CD4-positive, alpha-beta T cell (primary cell): ENCODE measurements at regions of chr18 and their contacts with region 1.

Region 1: GRCh38 chr18:63155169-63155852 is 164.3 kb downstream of the BCL2 start:
- DNase-seq: peak; percentile 63 to 90 (median 76)
- ATAC-seq: peak; percentile 75
- H3K4me3 ChIP-seq: peak overlapping the region; percentile 51
- H3K4me3 Mint-ChIP-seq: peak overlapping the region; percentile 85
- H3K27ac ChIP-seq: peak overlapping the region; percentile 95 to 96
- H3K27ac Mint-ChIP-seq: peak overlapping the region; percentile 91
- H3K4me1 ChIP-seq: peaks cover 97% of the 10 kb centered on the region
- H3K4me1 Mint-ChIP-seq: peaks cover 100% of the 10 kb centered on the region
- H3K27me3 ChIP-seq: no peaks in the 10 kb centered on the region
- H3K27me3 Mint-ChIP-seq: no peaks in the 10 kb centered on the region
- CTCF ChIP-seq: peak; percentile 94

Region 2: DNA sequence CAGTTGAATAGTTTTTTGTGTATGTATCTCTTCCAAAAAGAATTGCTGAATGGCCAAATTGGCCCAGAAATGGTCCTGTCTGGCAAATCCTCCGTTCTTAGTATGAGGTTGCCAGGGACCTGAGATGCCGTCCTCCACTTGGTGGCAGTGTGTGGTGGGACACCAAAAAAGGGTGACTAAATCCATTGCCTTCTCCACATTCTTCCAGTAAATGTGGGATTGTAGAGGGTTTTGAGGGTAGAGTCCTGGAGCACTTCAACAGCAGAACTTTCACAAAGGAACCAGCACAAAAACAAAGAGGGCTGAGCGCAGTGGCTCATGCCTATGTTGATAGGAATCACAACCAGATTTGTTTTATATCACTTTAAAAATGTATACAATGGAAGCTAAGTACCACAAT is 35.7 kb before region 1 on chr18:
- CTCF ChIA-PET with region 1: no interaction called
- POLR2A ChIA-PET with region 1: no interaction called
- intact Hi-C with region 1: no loop called
- DNase-seq: peak in 4 of 14 experiments; percentile 21 to 44 (median 32)
- ATAC-seq: no peak
- H3K4me3 ChIP-seq: no peak overlapping the region
- H3K4me3 Mint-ChIP-seq: no peak overlapping the region
- H3K27ac ChIP-seq: no peak overlapping the region
- H3K27ac Mint-ChIP-seq: no peak overlapping the region
- H3K4me1 ChIP-seq: no peaks in the 10 kb centered on the region
- H3K4me1 Mint-ChIP-seq: no peaks in the 10 kb centered on the region
- H3K27me3 ChIP-seq: no peaks in the 10 kb centered on the region
- H3K27me3 Mint-ChIP-seq: no peaks in the 10 kb centered on the region
- CTCF ChIP-seq: no peak

Region 3: DNA sequence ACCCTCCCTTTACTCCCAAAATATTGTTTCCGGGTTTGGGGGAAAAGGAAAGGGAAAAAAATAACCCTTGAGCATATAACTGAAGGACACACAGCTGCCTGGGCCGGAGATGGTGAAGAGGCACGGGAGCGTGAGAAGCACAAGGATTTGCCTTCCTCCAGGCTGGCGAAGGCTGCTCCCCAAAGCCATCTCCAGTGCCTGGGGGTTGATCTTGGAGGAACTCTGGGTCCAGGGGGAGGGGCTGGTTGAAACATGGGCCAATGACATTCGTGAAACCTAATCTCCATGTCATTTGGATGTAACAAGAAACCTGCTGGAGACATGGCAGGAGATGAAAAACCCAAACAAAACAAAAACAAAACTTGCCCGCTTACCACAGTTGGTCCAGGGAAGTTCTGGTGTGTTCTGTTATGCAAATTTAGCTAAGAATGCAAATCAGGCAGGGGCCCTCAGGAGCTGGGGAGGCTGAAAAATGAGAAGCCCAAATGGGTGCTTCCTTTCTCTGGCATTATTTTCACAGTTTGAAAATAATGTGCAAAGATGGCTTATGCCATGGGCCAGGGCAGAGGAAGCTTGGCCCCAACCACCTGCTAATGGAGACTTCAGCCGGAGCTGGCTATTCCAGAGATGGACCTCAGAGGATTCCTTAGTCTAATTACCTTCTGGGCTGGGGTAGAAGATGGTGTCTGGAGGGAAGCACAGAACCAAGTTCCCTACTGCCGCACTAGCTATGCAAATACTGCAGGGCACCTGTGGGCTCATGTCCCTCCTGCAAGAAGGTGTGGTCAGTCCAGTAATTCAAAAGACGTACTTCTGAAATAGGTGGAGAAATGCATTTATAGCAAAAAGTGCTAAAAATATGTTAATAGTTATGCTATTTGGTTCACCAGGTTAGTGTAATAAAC is 16.6 kb before region 1 on chr18:
- CTCF ChIA-PET with region 1: interaction called, 33 read pairs
- POLR2A ChIA-PET with region 1: interaction called, 11 read pairs
- intact Hi-C with region 1: loop called in 1 of 2 experiments (anchors 1 kb)
- DNase-seq: no peak
- ATAC-seq: peak; percentile 12
- H3K4me3 ChIP-seq: peak overlapping the region; percentile 38
- H3K4me3 Mint-ChIP-seq: peak overlapping the region; percentile 88
- H3K27ac ChIP-seq: peak overlapping the region; percentile 23 to 51
- H3K27ac Mint-ChIP-seq: peak overlapping the region; percentile 83
- H3K4me1 ChIP-seq: peaks cover 46% of the 10 kb centered on the region
- H3K4me1 Mint-ChIP-seq: peaks cover 70% of the 10 kb centered on the region
- H3K27me3 ChIP-seq: no peaks in the 10 kb centered on the region
- H3K27me3 Mint-ChIP-seq: no peaks in the 10 kb centered on the region
- CTCF ChIP-seq: no peak

Region 4: DNA sequence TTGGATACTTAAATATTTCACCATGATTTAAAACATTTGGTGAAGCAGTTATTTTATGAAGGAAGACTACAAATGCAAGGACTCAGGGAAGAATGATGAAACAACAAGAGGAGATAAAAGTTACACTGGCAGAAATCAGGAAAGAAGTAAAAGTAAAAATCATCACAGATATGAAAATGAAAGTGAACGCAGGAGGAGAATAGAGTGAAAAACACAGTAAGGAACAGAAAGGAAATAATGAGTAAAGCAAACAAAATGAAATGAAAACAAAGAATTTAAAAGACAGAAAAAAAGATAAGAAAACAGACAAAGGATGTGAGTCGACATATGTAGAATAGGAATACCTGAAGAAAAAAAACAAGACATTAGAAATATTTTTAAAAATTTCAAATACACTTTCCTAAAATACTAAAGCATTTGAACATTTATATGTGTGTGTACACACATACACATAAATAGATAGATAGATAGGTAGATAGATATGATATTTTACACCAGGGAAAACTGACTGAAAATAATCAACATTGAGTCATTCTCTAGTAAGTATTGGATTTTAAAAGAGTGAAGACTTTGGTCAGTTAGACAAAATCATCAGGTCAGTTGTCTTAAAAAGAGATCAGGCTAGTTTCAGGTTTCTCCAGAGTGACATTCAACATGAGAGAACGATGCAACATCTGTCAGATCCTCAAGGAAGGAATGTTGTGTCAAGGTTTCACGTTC is 223.8 kb after region 1 on chr18:
- CTCF ChIA-PET with region 1: no interaction called
- POLR2A ChIA-PET with region 1: no interaction called
- intact Hi-C with region 1: no loop called
- DNase-seq: no peak
- ATAC-seq: no peak
- H3K4me3 ChIP-seq: no peak overlapping the region
- H3K4me3 Mint-ChIP-seq: peak overlapping the region; percentile 1
- H3K27ac ChIP-seq: no peak overlapping the region
- H3K27ac Mint-ChIP-seq: no peak overlapping the region
- H3K4me1 ChIP-seq: no peaks in the 10 kb centered on the region
- H3K4me1 Mint-ChIP-seq: peaks cover 7% of the 10 kb centered on the region
- H3K27me3 ChIP-seq: no peaks in the 10 kb centered on the region
- H3K27me3 Mint-ChIP-seq: no peaks in the 10 kb centered on the region
- CTCF ChIP-seq: no peak